Cardiac septum (tissue), 1 donor: ENCODE measurements at regions of chr4 and their contacts with region 1.

Region 1: GRCh38 chr4:8340781-8341241 is 71.3 kb downstream of the HTRA3 start:
- DNase-seq: peak; percentile 87

Region 2: GRCh38 chr4:8391972-8392371 is 51.2 kb after region 1 on chr4:
- intact Hi-C with region 1: loop called (anchors 2 kb)
- DNase-seq: no peak